ENCODE measurements at regions of chr17 and their contacts with region 1.

Region 1: DNA sequence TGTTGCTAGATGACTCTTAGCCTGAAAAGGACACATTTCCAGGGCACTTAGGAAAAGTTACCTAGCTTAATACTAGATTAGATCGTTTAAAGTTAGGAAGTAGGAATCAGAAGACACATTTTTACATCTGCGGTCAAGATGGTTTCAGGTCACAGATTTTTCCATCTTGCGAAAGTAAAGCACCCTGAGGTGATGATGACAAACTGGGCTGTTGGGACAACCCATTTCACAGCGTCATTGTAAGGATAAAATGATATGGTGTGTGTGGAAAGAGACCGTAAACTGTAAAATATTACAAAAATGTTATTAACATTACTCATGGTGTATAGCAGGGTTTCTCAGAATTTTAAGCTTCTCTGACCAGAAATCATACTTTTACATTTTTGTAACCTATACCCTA is 10.1 kb upstream of the MAP2K6 start:
- DNase-seq: peak in 1 of 2 experiments; percentile 56
- ATAC-seq: peak; percentile 49 to 66; a peak in 5 of 6 replicates
- H3K4me3 ChIP-seq: no peak overlapping the region
- H3K27ac ChIP-seq: peak overlapping the region; percentile 62 to 80
- H3K4me1 ChIP-seq: peaks cover 54% of the 10 kb centered on the region
- CTCF ChIP-seq: no peak
- EP300 ChIP-seq: peak in 1 of 2 experiments; percentile 68; a peak in 1 of 5 replicates
- POLR2A ChIP-seq: no peak
- RAD21 ChIP-seq: no peak

Region 2: GRCh38 chr17:69335058-69335457 is 69.3 kb before region 1 on chr17:
- CTCF ChIA-PET with region 1: no interaction called
- POLR2A ChIA-PET with region 1: no interaction called
- DNase-seq: peak; percentile 39 to 68
- ATAC-seq: peak in 1 of 2 experiments; percentile 53; a peak in 2 of 6 replicates
- H3K4me3 ChIP-seq: no peak overlapping the region
- H3K27ac ChIP-seq: no peak overlapping the region
- H3K4me1 ChIP-seq: no peaks in the 10 kb centered on the region
- CTCF ChIP-seq: peak; percentile 48
- EP300 ChIP-seq: no peak
- POLR2A ChIP-seq: no peak
- RAD21 ChIP-seq: peak; percentile 55 to 70

Region 3: GRCh38 chr17:69388822-69389442 is 15.4 kb before region 1 on chr17:
- CTCF ChIA-PET with region 1: interaction called, 25 read pairs
- POLR2A ChIA-PET with region 1: interaction called, 4 read pairs
- DNase-seq: no peak
- ATAC-seq: no peak
- H3K4me3 ChIP-seq: no peak overlapping the region
- H3K27ac ChIP-seq: no peak overlapping the region
- H3K4me1 ChIP-seq: peaks cover 13% of the 10 kb centered on the region; the same call in 2 of the 3 replicates
- CTCF ChIP-seq: no peak
- EP300 ChIP-seq: no peak
- POLR2A ChIP-seq: no peak
- RAD21 ChIP-seq: no peak

Region 4: GRCh38 chr17:69414408-69415274 is 10.3 kb after region 1 on chr17 and contains the start of gene MAP2K6:
- CTCF ChIA-PET with region 1: interaction called, 3 read pairs
- POLR2A ChIA-PET with region 1: interaction called, 12 read pairs
- DNase-seq: peak; percentile 85 to 90
- ATAC-seq: peak; percentile 98 to 100
- H3K4me3 ChIP-seq: peak within 1 kb of the TSS; percentile 54
- H3K27ac ChIP-seq: peak within 1 kb of the TSS; percentile 76 to 89
- H3K4me1 ChIP-seq: peaks cover 33% of the 10 kb centered on the region
- CTCF ChIP-seq: no peak
- EP300 ChIP-seq: no peak
- POLR2A ChIP-seq: peak; percentile 68
- RAD21 ChIP-seq: peak in 1 of 2 experiments; percentile 9; a peak in 1 of 5 replicates
- polyA plus RNA-seq, gene MAP2K6: 20.1 and 20.2 TPM in 2 replicates

Region 5: DNA sequence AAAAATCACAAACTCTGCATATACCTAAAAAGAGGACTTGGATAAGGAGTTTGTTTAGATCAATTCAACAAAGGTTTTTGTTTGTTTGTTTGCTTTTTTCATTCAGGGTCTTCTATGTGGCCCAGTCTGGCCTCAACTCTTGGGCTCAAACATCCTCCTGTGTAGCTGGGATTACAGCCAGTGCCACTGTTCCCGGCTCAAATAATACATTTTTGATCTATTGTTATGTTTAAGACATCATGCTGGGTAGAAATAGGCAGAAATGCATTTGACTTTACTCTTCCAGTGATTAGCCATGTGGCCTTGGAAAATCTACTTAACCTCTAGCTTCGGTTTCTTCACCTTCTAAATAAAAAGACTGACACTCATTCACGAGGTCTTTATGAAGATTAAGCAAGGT is 21.6 kb after region 1 on chr17:
- CTCF ChIA-PET with region 1: no interaction called
- POLR2A ChIA-PET with region 1: no interaction called
- DNase-seq: no peak
- ATAC-seq: no peak
- H3K4me3 ChIP-seq: no peak overlapping the region
- H3K27ac ChIP-seq: no peak overlapping the region
- H3K4me1 ChIP-seq: no peaks in the 10 kb centered on the region
- CTCF ChIP-seq: no peak
- EP300 ChIP-seq: no peak
- POLR2A ChIP-seq: no peak
- RAD21 ChIP-seq: no peak

Region 6: GRCh38 chr17:69457603-69458002 is 53.2 kb after region 1 on chr17:
- CTCF ChIA-PET with region 1: no interaction called
- POLR2A ChIA-PET with region 1: no interaction called
- DNase-seq: no peak
- ATAC-seq: no peak
- H3K4me3 ChIP-seq: no peak overlapping the region
- H3K27ac ChIP-seq: no peak overlapping the region
- H3K4me1 ChIP-seq: no peaks in the 10 kb centered on the region
- CTCF ChIP-seq: no peak
- EP300 ChIP-seq: no peak
- POLR2A ChIP-seq: no peak
- RAD21 ChIP-seq: no peak